Breast epithelium (tissue), 4 donors: ENCODE measurements at regions of chr13 and their contacts with region 1.

Region 1: GRCh38 chr13:58474581-58474980 is 843.0 kb downstream of the PCDH17 start:
- DNase-seq: no peak
- H3K4me3 ChIP-seq: no peak overlapping the region
- H3K27ac ChIP-seq: no peak overlapping the region
- H3K4me1 ChIP-seq: no peaks in the 10 kb centered on the region
- H3K27me3 ChIP-seq: no peaks in the 10 kb centered on the region
- CTCF ChIP-seq: no peak
- POLR2A ChIP-seq: no peak

Region 2: GRCh38 chr13:58452123-58452623 is 22.4 kb before region 1 on chr13:
- intact Hi-C with region 1: loop called (anchors 2 kb)
- DNase-seq: no peak
- H3K4me3 ChIP-seq: no peak overlapping the region
- H3K27ac ChIP-seq: no peak overlapping the region
- H3K4me1 ChIP-seq: no peaks in the 10 kb centered on the region
- H3K27me3 ChIP-seq: no peaks in the 10 kb centered on the region
- CTCF ChIP-seq: no peak
- POLR2A ChIP-seq: no peak